ENCODE measurements at regions of chr11 and their contacts with region 1.

Region 1: DNA sequence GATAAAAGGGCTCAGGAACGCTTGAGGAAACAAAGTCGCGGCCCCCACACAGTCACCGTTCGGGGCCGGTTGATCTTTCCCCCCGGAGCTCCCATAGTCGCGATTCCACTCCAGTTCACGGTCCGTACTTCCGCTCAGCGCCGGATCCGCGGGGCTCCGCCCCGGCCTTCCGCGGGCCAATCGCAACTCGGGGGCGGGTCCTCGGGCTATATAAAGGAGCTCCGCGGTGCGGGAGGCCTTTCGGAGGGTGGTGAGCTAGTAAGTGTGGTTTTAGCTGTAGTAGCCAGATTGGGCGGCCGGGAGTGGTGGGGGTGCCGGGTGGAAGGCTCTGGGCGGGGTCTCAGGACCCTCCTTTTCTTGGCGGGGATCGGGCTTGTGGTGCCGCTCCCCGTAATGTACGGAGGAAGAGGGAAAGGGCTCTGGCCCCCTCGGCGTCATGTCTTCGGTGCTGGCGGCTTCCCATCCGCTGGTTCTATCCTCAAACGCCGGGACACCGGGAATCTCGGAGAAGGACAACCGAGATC is at the starts of genes C11orf98 and CSKMT:
- DNase-seq: peak; percentile 87 to 98
- H3K4me3 ChIP-seq: peak within 1 kb of the TSS; percentile 88
- H3K27ac ChIP-seq: peak within 1 kb of the TSS; percentile 72
- H3K4me1 ChIP-seq: peaks cover 33% of the 10 kb centered on the region
- H3K27me3 ChIP-seq: no peaks in the 10 kb centered on the region
- CTCF ChIP-seq: no peak
- total RNA-seq, gene C11orf98: 86.7 and 94.9 TPM in 2 replicates
- total RNA-seq, gene CSKMT: 19.2 and 51.9 TPM in 2 replicates

Region 2: DNA sequence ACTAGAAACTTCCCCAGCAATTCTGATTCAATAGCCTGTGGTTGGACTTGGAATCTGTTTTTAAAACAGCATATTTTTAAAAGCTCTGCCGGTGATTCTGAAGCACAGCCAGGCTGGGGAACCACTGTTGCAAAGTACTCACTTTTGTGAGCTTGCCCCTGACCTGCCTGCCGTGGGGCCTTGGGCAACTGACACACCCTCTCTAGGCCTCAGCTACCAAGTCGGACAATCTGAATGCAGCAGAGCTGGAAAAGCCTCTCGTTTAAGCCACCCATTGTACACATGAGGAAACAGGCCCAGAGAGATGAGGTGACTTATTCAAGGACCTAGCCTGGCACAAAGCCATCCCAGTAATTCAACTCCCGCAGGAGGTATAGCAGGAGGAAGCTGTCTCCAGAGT is 1722.1 kb before region 1 on chr11:
- CTCF ChIA-PET with region 1: no interaction called
- POLR2A ChIA-PET with region 1: interaction called, 10 read pairs
- intact Hi-C with region 1: no loop called
- DNase-seq: peak; percentile 86 to 99
- H3K4me3 ChIP-seq: peak overlapping the region; percentile 11; the same call in 1 of the 2 replicates
- H3K27ac ChIP-seq: peak overlapping the region; percentile 74
- H3K4me1 ChIP-seq: peaks cover 26% of the 10 kb centered on the region
- H3K27me3 ChIP-seq: no peaks in the 10 kb centered on the region
- CTCF ChIP-seq: no peak

Region 3: DNA sequence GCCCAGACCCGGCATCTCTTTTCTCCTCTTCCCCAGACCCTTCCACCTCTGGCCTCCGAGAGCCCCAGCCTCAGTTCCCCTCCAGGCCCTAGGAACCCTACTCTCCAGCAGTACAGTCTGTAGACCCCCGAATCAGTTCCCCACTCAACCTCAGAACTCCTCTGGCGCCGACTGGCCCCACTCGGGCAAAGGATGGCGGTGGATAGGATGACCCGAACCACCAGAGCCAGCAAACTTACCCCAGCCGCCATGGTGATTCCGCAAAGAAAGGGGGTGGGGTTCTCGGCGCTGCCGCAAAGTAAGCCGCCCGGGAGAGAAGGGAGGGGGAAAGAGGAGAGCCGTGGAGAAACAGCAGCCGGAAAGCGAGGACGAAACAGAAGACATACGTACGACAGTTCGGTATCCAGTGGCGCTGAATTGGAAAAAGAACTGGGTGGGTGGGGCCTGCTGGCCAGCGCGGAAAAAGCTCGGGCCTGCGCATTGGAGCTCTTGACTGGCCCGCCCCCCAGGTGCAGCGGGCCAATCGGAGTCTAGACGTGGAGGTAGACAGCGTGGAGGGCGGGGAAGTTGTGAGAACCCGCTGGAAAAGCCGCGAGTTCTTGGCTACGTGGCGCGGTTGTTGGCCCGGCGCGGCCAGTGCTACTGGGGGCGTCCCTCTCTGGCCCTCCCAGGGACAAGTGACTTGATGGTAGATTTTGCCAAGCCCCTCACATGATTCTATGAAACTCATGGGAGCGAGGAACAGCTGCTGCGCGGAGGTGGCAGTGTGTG is 91.4 kb before region 1 on chr11 and contains the start of gene EEF1G:
- CTCF ChIA-PET with region 1: no interaction called
- POLR2A ChIA-PET with region 1: interaction called, 15 read pairs
- intact Hi-C with region 1: no loop called
- DNase-seq: peak; percentile 100
- H3K4me3 ChIP-seq: peak within 1 kb of the TSS; percentile 92
- H3K27ac ChIP-seq: peak within 1 kb of the TSS; percentile 86
- H3K4me1 ChIP-seq: peaks cover 42% of the 10 kb centered on the region
- H3K27me3 ChIP-seq: no peaks in the 10 kb centered on the region
- CTCF ChIP-seq: no peak
- total RNA-seq, gene EEF1G: 1,773 and 2,008 TPM in 2 replicates

Region 4: GRCh38 chr11:62652161-62653006 is 12.8 kb before region 1 on chr11:
- CTCF ChIA-PET with region 1: interaction called, 3 read pairs
- POLR2A ChIA-PET with region 1: interaction called, 37 read pairs
- intact Hi-C with region 1: no loop called
- DNase-seq: no peak
- H3K4me3 ChIP-seq: peak overlapping the region; percentile 96
- H3K27ac ChIP-seq: peak overlapping the region; percentile 75
- H3K4me1 ChIP-seq: peaks cover 15% of the 10 kb centered on the region
- H3K27me3 ChIP-seq: no peaks in the 10 kb centered on the region
- CTCF ChIP-seq: no peak

Region 5: DNA sequence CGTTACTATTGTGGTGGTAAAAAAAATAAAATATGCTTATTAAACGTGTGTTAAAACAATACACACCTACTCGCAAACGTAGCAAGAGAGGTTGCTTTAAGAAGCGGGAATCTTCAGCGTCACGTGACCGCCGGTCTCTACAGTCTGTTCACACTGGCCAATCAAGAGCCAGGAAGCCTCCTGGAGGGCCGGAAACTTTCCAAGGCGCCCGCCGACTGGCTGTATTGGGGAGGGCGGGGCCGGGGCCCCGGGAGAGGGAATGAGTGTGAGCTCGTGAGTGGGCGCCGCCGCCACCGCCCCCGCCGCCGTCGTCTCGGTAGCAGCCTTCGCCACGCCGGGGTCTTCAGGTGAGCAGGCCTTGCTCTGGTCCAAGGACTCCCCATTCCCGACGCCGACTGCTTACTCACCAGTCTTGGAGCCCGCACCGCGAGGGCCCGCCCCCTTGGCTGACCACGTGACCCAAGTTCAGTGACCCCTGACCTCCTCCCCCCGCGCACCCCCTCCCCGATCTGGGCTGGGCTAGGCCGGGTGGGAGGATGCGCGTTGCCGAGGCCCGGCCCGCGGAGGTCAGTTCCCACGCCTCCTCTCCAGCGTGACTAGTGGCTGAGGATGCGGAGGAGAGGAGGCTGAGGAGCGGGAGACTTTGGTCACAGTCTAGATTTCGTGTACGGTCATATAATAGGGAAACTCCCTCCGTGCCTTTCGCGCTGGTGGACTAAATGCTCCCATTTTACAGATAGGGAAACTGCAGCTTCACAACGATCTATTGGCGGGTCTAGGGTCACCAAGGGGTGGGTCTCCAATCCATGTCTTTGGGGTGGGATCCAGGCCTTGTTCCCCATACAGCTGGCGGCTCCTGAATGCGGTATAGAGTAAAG is 106.2 kb after region 1 on chr11 and contains the start of gene TAF6L:
- CTCF ChIA-PET with region 1: interaction called, 5 read pairs
- POLR2A ChIA-PET with region 1: interaction called, 15 read pairs
- intact Hi-C with region 1: loop called (anchors 10 kb)
- DNase-seq: peak; percentile 95 to 97
- H3K4me3 ChIP-seq: peak within 1 kb of the TSS; percentile 59
- H3K27ac ChIP-seq: peak within 1 kb of the TSS; percentile 77
- H3K4me1 ChIP-seq: peaks cover 14% of the 10 kb centered on the region
- H3K27me3 ChIP-seq: no peaks in the 10 kb centered on the region
- CTCF ChIP-seq: no peak
- total RNA-seq, gene TAF6L: 31.2 and 36.4 TPM in 2 replicates

Region 6: GRCh38 chr11:62847767-62848314 is 182.7 kb after region 1 on chr11:
- CTCF ChIA-PET with region 1: no interaction called
- POLR2A ChIA-PET with region 1: interaction called, 24 read pairs
- intact Hi-C with region 1: no loop called
- DNase-seq: peak in 1 of 2 experiments; percentile 10
- H3K4me3 ChIP-seq: no peak overlapping the region
- H3K27ac ChIP-seq: no peak overlapping the region
- H3K4me1 ChIP-seq: peaks cover 15% of the 10 kb centered on the region
- H3K27me3 ChIP-seq: no peaks in the 10 kb centered on the region
- CTCF ChIP-seq: no peak

Measured in PC-9 (cell line).